Cardiac septum (tissue), 1 donor: ENCODE measurements at regions of chr1 and their contacts with region 1.

Region 1: DNA sequence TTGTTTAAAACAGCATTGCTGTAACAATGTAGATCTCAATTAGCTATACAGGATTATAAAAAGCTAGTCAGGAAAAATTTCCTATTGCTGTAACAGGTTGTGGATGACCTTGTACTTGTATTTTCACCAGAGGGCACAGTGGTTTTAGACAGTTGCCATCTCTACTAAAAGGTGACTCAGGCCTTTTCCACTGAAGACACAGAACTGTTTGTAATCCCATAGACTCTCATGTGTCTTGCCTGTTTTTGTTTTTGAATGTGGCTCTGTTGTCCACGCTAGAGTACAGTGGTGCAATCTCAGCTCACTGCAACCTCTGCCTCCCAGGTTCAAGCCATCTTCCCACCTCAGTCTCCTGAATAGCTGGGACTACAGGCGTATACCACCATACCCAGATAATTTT is 5.9 kb downstream of the MTFR1L start:
- DNase-seq: no peak

Region 2: DNA sequence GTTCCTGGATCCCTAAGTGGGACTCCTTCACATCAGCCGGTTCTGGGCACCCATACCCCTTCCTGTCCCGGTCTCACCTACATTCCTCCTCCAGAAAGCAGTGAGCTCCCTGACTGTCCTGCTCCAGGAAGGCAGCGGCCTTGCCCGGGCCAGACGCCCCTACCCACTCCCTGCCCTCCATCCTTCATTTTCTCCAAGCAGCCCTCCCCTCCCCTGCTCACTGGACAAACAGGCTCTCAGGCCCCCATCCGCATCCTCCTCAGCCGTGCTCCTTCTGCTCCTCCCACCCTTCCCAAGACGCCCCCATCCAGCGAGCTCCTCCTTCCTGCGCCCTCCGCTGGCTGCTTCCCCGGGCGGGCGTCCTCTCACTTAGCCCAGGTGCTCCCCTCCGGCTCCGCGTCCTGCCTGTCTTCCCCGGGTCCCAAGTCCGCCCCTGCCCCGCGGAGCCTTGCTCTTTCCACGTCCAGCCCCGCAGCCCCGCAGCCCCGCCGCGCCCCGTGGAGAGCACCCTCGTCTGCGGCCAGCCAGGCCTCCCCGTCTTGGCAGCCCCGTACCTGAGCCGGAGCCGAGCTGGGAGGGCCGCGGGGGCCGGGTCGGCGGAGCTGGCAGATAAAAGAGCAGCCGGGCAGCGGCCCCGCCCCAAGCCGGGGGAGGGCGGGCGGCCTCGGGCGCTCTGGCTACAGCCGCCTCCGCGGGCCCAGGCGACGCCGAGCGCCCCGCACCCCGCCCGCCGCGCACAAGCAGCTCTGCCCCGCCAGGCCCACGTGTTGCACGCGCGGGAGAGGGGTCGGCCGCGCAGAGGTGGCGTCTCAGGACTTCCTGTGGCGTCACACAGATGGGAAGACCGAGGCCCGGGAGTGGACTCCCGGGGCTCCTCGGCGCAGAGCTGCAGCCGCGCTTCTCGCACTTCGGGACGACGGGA is 49.6 kb after region 1 on chr1 and contains the start of gene PAQR7:
- intact Hi-C with region 1: loop called (anchors 5 kb)
- DNase-seq: peak; percentile 89
- total RNA-seq, gene PAQR7: 2.4 TPM

Region 3: GRCh38 chr1:25904943-25905679 is 79.5 kb after region 1 on chr1:
- intact Hi-C with region 1: loop called (anchors 2 kb)
- DNase-seq: peak; percentile 97